ENCODE measurements at regions of chr11 and their contacts with region 1.

Region 1: DNA sequence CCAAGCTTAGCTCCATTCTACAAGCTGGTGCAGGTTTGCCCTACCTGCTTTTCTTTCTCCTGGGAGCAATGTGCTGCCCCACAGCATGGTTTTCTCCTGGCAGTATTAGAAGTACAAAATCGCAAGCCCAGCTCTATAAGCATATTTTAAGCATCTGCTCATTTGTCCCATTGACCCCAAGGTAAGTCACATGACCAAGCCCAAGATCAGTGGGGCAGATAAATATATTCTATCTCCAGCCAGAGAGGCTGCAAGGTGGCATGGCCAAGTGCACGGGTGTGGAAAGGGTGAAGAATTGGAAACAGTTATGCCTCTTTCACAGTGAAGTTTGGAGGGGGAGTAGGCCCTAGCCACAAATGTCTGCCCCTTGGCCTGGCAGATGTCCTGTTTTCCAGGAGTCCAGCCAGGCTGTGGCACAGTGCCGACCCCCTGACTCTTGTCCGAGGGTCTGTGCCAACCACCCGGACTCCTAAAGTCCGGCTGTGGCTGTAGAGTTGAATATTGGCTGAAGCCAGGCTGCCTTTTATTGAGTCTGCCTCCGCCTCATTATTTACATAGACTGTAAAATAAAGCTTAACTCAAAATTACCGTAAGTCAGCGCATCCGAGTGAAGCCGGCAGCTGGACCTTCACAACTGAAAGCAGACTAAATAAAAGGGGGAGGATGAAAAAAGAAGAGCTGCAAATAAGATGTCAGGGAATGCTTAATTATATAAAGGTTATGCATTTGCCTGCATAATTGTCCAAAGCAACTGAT is 165.7 kb downstream of the COMMD9 start:
- DNase-seq: no peak
- ATAC-seq: no peak
- H3K4me3 ChIP-seq: no peak overlapping the region
- H3K27ac ChIP-seq: no peak overlapping the region
- H3K4me1 ChIP-seq: no peaks in the 10 kb centered on the region
- H3K27me3 ChIP-seq: peaks cover 0 to 21% (median 6%) of the 10 kb centered on the region in 7 donors
- CTCF ChIP-seq: no peak

Region 2: DNA sequence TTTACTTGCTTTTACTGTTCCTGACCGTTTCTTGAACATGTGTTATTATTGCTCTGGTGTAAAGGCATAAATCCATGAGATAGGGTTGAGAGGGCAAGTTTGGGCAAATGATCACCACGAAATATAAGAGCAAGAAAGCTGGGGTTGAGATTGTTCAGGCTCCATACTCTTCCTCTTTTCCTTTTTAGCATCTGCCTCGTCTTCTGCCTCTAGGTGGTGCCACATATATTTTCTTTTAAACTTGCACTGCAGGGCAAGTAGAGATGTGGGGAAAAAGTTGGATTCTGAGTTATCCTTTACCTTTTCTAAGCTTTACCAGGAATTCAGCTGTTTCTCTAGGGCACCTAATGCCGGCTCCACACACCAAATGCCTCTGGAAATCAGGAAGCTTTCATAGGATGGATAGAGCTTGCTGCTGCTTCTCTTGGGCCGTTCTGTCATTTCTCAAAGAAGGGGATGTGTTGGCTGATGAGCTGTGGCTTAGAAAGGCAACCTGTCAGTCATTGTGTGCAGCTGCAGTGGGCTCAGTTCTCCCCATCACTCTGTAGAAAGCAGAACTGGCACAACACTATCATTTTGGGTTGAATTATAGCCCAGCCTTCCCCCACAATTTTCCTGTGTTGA is 81.4 kb before region 1 on chr11:
- intact Hi-C with region 1: loop called in 2 of 10 experiments (anchors 5 kb)
- DNase-seq: no peak
- ATAC-seq: peak in 2 of 8 donors; percentile 50 to 58
- H3K4me3 ChIP-seq: no peak overlapping the region
- H3K27ac ChIP-seq: no peak overlapping the region
- H3K4me1 ChIP-seq: peaks cover 0 to 7% (median 0%) of the 10 kb centered on the region in 9 donors
- H3K27me3 ChIP-seq: no peaks in the 10 kb centered on the region
- CTCF ChIP-seq: peak; percentile 15 to 64 (median 53)

Region 3: GRCh38 chr11:36048496-36049247 is 74.9 kb before region 1 on chr11:
- intact Hi-C with region 1: loop called in 2 of 10 experiments (anchors 5 kb)
- DNase-seq: no peak
- ATAC-seq: no peak
- H3K4me3 ChIP-seq: no peak overlapping the region
- H3K27ac ChIP-seq: no peak overlapping the region
- H3K4me1 ChIP-seq: no peaks in the 10 kb centered on the region
- H3K27me3 ChIP-seq: peaks cover 0 to 8% (median 0%) of the 10 kb centered on the region in 7 donors
- CTCF ChIP-seq: no peak

Measured in heart right ventricle (tissue), 16 donors.